ENCODE measurements at regions of chr16 and their contacts with region 1.

Region 1: GRCh38 chr16:106623-107324 is 28.7 kb downstream of the MPG start:
- DNase-seq: peak; percentile 41 to 70
- H3K4me3 ChIP-seq: no peak overlapping the region
- H3K27ac ChIP-seq: no peak overlapping the region
- H3K4me1 ChIP-seq: peaks cover 0 to 1% (median 0%) of the 10 kb centered on the region in 4 experiments; a peak in 1 of 7 replicates
- H3K27me3 ChIP-seq: no peaks in the 10 kb centered on the region
- CTCF ChIP-seq: peak; percentile 61 to 94 (median 83)
- EP300 ChIP-seq: no peak
- POLR2A ChIP-seq: no peak
- RAD21 ChIP-seq: peak; percentile 79

Region 2: GRCh38 chr16:9903-10665 is 96.7 kb before region 1 on chr16:
- CTCF ChIA-PET with region 1: no interaction called
- POLR2A ChIA-PET with region 1: no interaction called
- DNase-seq: no peak
- H3K4me3 ChIP-seq: peak overlapping the region in 1 of 4 experiments; percentile 22; a peak in 1 of 8 replicates
- H3K27ac ChIP-seq: no peak overlapping the region
- H3K4me1 ChIP-seq: no peaks in the 10 kb centered on the region
- H3K27me3 ChIP-seq: no peaks in the 10 kb centered on the region
- CTCF ChIP-seq: no peak
- EP300 ChIP-seq: no peak
- POLR2A ChIP-seq: no peak
- RAD21 ChIP-seq: no peak

Region 3: DNA sequence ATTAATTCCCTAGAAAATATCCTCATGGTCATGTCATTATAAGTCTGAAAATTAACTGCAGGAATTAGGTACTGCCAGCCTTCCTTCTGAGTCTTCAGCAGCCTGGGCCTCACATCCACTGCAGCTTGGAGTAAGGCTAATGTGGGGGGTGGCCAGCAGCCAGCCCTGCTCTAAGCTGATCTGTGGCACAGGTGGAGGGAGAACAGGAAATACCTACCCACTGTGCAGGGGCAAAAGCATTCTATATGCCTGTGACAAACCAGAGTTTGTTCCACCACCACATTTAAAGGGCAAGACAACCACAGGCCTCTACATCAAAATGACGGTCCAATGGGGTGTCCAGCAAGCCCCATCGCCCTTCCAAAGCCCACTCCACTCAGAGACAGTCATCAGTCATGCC is 22.3 kb after region 1 on chr16:
- CTCF ChIA-PET with region 1: interaction called, 17 read pairs
- POLR2A ChIA-PET with region 1: interaction called, 3 read pairs
- DNase-seq: no peak
- H3K4me3 ChIP-seq: no peak overlapping the region
- H3K27ac ChIP-seq: no peak overlapping the region
- H3K4me1 ChIP-seq: no peaks in the 10 kb centered on the region
- H3K27me3 ChIP-seq: no peaks in the 10 kb centered on the region
- CTCF ChIP-seq: no peak
- EP300 ChIP-seq: no peak
- POLR2A ChIP-seq: no peak
- RAD21 ChIP-seq: no peak

Region 4: GRCh38 chr16:180938-181667 is 74.3 kb after region 1 on chr16:
- CTCF ChIA-PET with region 1: interaction called, 41 read pairs
- POLR2A ChIA-PET with region 1: interaction called, 3 read pairs
- DNase-seq: peak; percentile 54 to 99
- H3K4me3 ChIP-seq: peak overlapping the region; percentile 4 to 58 (median 20); a peak in 6 of 8 replicates
- H3K27ac ChIP-seq: no peak overlapping the region
- H3K4me1 ChIP-seq: peaks cover 0 to 5% (median 3%) of the 10 kb centered on the region in 4 experiments; a peak in 4 of 7 replicates
- H3K27me3 ChIP-seq: peaks cover 32 to 46% (median 41%) of the 10 kb centered on the region in 4 experiments
- CTCF ChIP-seq: peak; percentile 88 to 92 (median 91)
- EP300 ChIP-seq: 0 out of 3 replicates have a peak, but pooled peaks of 1 of the 2 experiments have one; percentile 6
- POLR2A ChIP-seq: peak in 1 of 2 experiments; percentile 22; a peak in 2 of 3 replicates
- RAD21 ChIP-seq: peak; percentile 81 to 82

Region 5: DNA sequence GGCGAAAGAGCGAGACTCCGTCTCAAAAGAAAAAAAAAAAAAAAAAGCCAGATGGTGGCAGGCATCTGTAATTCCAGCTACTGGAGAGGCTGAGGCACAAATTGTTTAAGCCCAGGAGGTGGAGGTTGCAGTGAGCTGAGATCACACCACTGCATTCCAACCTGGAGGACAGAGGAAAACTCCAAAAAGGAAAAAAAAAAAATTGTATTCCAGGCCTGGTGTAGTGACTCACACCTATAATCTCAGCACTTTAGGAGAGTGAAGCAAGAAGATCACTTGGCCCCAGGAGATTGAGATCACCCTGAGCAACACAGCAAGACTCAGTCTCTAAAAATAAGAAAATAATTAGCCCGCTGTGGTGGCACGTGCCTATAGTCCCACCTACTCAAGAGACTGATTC is 93.6 kb after region 1 on chr16:
- CTCF ChIA-PET with region 1: no interaction called
- POLR2A ChIA-PET with region 1: no interaction called
- DNase-seq: no peak
- H3K4me3 ChIP-seq: no peak overlapping the region
- H3K27ac ChIP-seq: no peak overlapping the region
- H3K4me1 ChIP-seq: no peaks in the 10 kb centered on the region
- H3K27me3 ChIP-seq: no peaks in the 10 kb centered on the region
- CTCF ChIP-seq: no peak
- EP300 ChIP-seq: no peak
- POLR2A ChIP-seq: no peak
- RAD21 ChIP-seq: no peak